Posterior cingulate gyrus (tissue), 11 donors: ENCODE measurements at regions of chr3 and their contacts with region 1.

Region 1: GRCh38 chr3:197186887-197187588 is 111.4 kb downstream of the DLG1 start:
- DNase-seq: no peak

Region 2: DNA sequence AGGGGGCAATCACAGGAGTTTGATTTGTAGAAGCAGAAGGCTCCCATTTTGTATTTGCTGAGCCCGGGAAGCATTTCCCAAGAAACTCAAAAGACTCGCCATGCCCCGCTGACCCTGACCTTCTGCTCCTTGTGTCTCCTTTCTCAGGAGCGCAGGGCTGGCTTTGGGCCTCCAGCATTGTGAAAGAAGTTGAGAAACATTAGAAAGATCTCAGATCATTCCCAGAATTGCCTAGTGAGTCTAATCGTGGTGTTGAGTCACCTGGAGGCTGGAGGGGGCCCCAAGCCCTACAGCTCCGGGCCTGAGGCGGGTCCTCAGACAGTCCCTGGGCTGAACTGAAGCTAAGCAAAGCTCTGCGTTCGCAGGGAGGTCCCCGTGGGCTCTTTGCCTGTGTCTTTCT is 207.5 kb before region 1 on chr3:
- intact Hi-C with region 1: loop called (anchors 1 kb)
- DNase-seq: peak in 1 of 10 donors; percentile 49

Region 3: DNA sequence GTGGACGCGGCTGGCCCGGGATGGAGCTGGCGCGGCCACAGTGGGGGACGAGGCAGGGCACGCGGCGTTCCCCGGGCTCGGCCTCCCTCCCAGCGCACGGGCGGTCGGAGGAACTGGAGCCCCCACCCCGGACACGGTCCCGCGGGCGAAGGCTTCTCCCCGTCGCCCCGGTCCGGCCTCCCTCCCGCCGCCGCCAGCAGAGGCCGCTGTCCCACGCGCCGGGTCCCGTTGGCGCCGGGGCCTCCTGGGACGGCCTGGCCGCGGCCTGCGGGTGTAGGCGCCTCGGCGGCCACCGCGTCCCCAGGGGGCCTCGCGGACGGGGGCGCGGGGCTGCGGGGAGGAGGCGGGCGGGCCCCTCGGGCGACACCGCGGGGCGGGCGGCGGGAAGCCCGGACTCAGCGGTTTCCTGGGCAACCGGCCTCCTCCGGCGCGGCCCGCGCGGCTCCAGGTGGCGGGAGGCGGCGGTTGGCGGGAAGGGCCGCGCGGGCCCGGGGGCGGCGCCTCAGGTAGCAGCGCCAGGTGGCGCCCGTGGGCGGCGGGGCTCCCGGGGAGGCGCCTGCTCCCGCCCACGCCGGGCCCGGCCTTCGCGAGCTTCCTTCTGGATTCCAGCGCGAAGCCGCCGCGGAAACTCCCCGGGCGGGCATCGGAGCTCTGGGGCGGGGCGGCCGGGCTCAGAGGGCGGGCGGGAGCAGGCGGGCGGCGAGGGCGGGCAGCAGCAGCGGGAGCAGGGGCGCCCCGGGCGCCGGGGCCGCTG is 184.2 kb before region 1 on chr3:
- intact Hi-C with region 1: loop called (anchors 2 kb)
- DNase-seq: peak; percentile 45 to 96 (median 66)

Region 4: DNA sequence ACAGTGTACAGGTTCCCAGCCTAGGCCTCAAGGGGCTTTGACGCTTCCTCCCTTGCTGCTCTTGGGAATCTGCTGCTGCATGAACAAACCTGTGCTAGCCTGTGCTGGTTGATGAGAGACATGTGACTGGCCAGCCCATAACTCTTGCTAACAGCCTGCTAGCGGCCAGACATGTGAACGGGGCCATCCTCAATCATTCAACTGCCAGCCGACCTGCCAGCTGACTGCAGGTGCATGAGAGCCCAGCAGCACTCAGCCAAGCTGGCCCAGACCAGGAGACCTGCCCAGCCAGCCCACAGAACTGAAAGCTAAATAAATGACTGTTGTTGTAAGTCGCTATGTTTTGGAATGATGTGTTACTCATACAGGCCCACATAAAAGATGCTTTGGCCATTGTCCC is 193.7 kb after region 1 on chr3:
- intact Hi-C with region 1: no loop called
- DNase-seq: peak in 1 of 10 donors; percentile 62